ENCODE measurements at regions of chr6 and their contacts with region 1.

Region 1: GRCh38 chr6:88780714-88781389 is 182.6 kb downstream of the RNGTT start:
- DNase-seq: peak in 13 of 14 experiments; percentile 2 to 77 (median 22)
- ATAC-seq: peak; percentile 80
- H3K4me3 ChIP-seq: no peak overlapping the region
- H3K4me3 Mint-ChIP-seq: no peak overlapping the region
- H3K27ac ChIP-seq: no peak overlapping the region
- H3K27ac Mint-ChIP-seq: no peak overlapping the region
- H3K4me1 ChIP-seq: no peaks in the 10 kb centered on the region
- H3K4me1 Mint-ChIP-seq: peaks cover 4% of the 10 kb centered on the region
- H3K27me3 ChIP-seq: no peaks in the 10 kb centered on the region
- H3K27me3 Mint-ChIP-seq: no peaks in the 10 kb centered on the region
- CTCF ChIP-seq: peak; percentile 90

Region 2: DNA sequence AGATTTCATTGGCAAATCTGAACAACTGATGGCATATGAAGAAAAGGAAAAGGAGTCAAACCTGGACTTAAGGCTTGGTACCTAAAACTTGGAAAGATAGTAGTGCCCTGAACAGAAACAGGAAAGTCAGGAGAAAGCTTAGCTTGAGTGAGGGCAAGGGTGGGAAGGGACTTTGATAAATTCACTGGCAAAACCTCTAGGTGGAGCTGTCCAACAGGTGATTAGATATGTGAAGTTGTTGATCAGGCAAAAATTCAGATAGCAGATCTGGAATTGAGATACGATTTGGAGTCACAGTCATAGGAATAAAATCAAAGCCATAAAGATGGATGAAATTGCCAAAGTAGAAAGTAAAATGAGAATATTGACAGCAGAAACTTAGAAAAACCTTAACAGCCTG is 1641.6 kb before region 1 on chr6:
- CTCF ChIA-PET with region 1: no interaction called
- POLR2A ChIA-PET with region 1: no interaction called
- intact Hi-C with region 1: loop called in 1 of 2 experiments (anchors 5 kb)
- DNase-seq: peak in 8 of 14 experiments; percentile 16 to 82 (median 54)
- ATAC-seq: peak; percentile 85
- H3K4me3 ChIP-seq: no peak overlapping the region
- H3K4me3 Mint-ChIP-seq: no peak overlapping the region
- H3K27ac ChIP-seq: no peak overlapping the region
- H3K27ac Mint-ChIP-seq: no peak overlapping the region
- H3K4me1 ChIP-seq: no peaks in the 10 kb centered on the region
- H3K4me1 Mint-ChIP-seq: peaks cover 5% of the 10 kb centered on the region
- H3K27me3 ChIP-seq: no peaks in the 10 kb centered on the region
- H3K27me3 Mint-ChIP-seq: peaks cover 13% of the 10 kb centered on the region
- CTCF ChIP-seq: peak; percentile 83

Region 3: GRCh38 chr6:87929843-87930288 is 851.0 kb before region 1 on chr6:
- CTCF ChIA-PET with region 1: no interaction called
- POLR2A ChIA-PET with region 1: no interaction called
- intact Hi-C with region 1: loop called (anchors 1 to 2 kb)
- DNase-seq: peak; percentile 16 to 74 (median 45)
- ATAC-seq: peak; percentile 75
- H3K4me3 ChIP-seq: no peak overlapping the region
- H3K4me3 Mint-ChIP-seq: no peak overlapping the region
- H3K27ac ChIP-seq: no peak overlapping the region
- H3K27ac Mint-ChIP-seq: no peak overlapping the region
- H3K4me1 ChIP-seq: peaks cover 3% of the 10 kb centered on the region
- H3K4me1 Mint-ChIP-seq: no peaks in the 10 kb centered on the region
- H3K27me3 ChIP-seq: no peaks in the 10 kb centered on the region
- H3K27me3 Mint-ChIP-seq: no peaks in the 10 kb centered on the region
- CTCF ChIP-seq: peak; percentile 64